HEK293T (cell line): ENCODE measurements at regions of chr19 and their contacts with region 1.

Region 1: DNA sequence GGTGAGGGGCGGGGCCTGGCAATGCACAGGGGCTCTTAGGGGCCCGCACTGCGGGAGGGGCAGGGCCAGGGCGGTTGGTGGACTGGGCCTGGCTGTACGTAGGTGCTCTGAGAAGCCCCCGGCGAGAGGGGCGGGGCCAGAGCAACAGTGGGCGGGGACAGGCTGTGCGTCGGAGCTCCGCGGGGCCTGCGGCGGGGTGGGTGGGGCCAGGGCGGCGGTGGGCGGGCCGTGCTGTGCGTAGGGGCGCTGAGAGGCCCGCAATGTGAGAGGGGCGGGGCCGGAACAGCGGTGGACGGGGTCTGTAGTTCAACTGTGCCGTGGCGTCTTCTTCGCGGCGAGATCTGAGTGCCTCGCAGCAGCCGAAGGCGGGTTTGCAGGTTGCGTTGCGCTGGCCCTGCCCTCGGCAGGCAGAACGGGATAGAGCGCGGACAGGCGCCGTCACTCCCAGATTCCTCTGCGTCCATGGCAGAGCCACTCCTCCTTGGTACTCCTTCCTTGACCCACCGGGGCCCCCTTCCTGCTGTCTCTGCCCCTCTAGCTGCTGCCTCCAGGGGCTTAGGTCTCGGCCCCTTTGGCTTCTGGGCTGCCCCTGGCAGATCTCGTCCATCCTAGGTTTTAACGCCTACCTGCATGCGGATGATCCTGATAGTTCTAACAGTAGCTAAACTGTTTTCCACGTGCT is 33.2 kb downstream of the CCNE1 start:
- DNase-seq: peak; percentile 98

Region 2: GRCh38 chr19:29858000-29858596 is 13.1 kb after region 1 on chr19:
- CTCF ChIA-PET with region 1: interaction called, 9 read pairs
- POLR2A ChIA-PET with region 1: interaction called, 11 read pairs
- DNase-seq: peak; percentile 64